HEK293 (cell line): ENCODE measurements at regions of chr16 and their contacts with region 1.

Region 1: DNA sequence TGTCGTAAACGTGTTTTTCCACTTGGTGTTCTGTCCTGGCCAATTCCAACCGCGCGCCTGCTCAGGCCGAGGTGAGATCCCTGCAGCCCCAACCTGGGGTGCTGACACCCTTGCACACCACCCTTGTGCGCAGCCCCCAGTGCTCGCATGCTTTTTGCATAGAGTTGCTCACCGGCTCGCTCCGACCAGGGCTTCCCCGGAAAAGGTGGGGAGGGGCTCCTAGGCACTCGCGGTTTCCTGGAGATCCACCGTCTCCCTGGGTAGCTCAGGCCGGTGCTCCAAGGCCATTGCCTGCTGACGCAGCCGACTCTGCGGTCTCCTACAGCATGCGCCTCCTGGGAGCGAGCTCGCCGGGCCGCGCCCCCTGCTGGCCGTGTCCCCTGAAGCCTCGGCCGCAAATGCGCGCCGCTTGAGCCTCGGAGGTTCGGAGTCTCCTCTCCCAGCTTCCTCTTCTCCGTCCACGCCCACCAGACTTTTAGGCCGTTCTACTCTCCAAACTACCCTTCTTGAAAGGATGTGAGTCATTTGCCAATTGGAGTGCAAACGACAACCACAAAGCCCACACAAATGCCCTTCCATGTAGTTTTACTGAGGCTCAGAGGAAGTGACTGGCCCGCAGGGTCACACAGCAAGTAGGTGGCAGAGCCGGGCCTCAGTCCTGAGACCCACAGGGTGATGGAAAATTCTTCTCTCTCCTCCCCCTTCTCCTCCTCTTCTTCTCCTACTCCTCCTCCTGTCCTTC is 7.2 kb upstream of the PDP2 start:
- H3K4me3 ChIP-seq: peak overlapping the region; percentile 5; the same call in 1 of the 2 replicates
- H3K27ac ChIP-seq: no peak overlapping the region; the same call in 1 of the 2 replicates
- H3K4me1 ChIP-seq: no peaks in the 10 kb centered on the region
- CTCF ChIP-seq: peak; percentile 98

Region 2: GRCh38 chr16:66406534-66407221 is 466.4 kb before region 1 on chr16:
- CTCF ChIA-PET with region 1: interaction called, 27 read pairs
- POLR2A ChIA-PET with region 1: no interaction called
- H3K4me3 ChIP-seq: peak overlapping the region; percentile 51
- H3K27ac ChIP-seq: no peak overlapping the region
- H3K4me1 ChIP-seq: no peaks in the 10 kb centered on the region; the same call in 1 of the 2 replicates
- CTCF ChIP-seq: peak; percentile 93

Region 3: GRCh38 chr16:66728117-66728787 is 144.9 kb before region 1 on chr16:
- CTCF ChIA-PET with region 1: interaction called, 29 read pairs
- POLR2A ChIA-PET with region 1: no interaction called
- H3K4me3 ChIP-seq: no peak overlapping the region
- H3K27ac ChIP-seq: no peak overlapping the region
- H3K4me1 ChIP-seq: no peaks in the 10 kb centered on the region
- CTCF ChIP-seq: peak; percentile 34

Region 4: DNA sequence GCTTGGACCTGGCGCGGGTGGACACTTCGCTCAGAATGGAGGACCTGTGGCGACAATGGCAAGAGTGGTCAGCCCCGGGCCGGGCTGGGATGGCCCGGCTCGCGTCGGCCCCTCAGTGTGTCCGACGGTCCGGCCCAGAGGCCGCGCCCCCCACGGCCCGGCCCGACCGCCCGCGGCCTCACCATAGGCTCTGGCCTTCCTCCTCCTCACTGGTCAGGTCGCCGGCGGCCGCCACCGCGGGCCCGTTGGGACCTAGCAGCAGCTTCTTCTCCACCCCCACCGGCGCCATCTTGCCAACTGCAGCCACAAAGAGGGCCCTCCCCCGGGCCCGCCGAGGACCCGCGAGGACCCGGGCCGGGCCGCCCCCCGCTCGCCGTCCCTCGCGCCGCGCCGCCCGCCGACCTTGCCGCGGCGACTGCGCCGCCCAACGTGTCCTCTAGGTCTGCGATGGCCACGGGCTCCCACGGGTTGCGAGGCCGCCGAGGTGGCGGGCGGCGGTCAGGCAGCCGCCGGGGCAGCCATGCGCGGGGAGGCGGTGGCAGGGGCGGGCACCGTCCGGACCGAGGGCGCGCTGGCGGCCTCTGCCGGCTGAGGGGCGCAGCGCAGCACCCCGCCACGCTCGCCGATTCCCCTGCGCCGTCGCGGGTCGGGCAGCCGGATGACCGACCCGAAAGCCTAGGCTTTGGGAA is 121.7 kb before region 1 on chr16 and contains the start of gene DYNC1LI2:
- CTCF ChIA-PET with region 1: interaction called, 10 read pairs
- POLR2A ChIA-PET with region 1: no interaction called
- H3K4me3 ChIP-seq: peak within 1 kb of the TSS; percentile 87
- H3K27ac ChIP-seq: peak within 1 kb of the TSS; percentile 98
- H3K4me1 ChIP-seq: peaks cover 6% of the 10 kb centered on the region
- CTCF ChIP-seq: 0 out of 2 replicates have a peak, but pooled peaks have one; percentile 32

Region 5: GRCh38 chr16:66786551-66786950 is 86.6 kb before region 1 on chr16:
- CTCF ChIA-PET with region 1: no interaction called
- POLR2A ChIA-PET with region 1: no interaction called
- H3K4me3 ChIP-seq: no peak overlapping the region
- H3K27ac ChIP-seq: no peak overlapping the region
- H3K4me1 ChIP-seq: no peaks in the 10 kb centered on the region
- CTCF ChIP-seq: no peak

Region 6: GRCh38 chr16:66824006-66824405 is 49.1 kb before region 1 on chr16:
- CTCF ChIA-PET with region 1: interaction called, 74 read pairs
- POLR2A ChIA-PET with region 1: interaction called, 4 read pairs
- H3K4me3 ChIP-seq: no peak overlapping the region
- H3K27ac ChIP-seq: no peak overlapping the region
- H3K4me1 ChIP-seq: no peaks in the 10 kb centered on the region
- CTCF ChIP-seq: no peak

Region 7: GRCh38 chr16:66844342-66845079 is 28.6 kb before region 1 on chr16 and contains the start of gene CA7:
- CTCF ChIA-PET with region 1: interaction called, 14 read pairs
- POLR2A ChIA-PET with region 1: no interaction called
- H3K4me3 ChIP-seq: peak within 1 kb of the TSS; percentile 13
- H3K27ac ChIP-seq: no peak within 1 kb of the TSS
- H3K4me1 ChIP-seq: no peaks in the 10 kb centered on the region
- CTCF ChIP-seq: no peak

Region 8: GRCh38 chr16:66858740-66859396 is 14.2 kb before region 1 on chr16:
- CTCF ChIA-PET with region 1: interaction called, 19 read pairs
- POLR2A ChIA-PET with region 1: interaction called, 6 read pairs
- H3K4me3 ChIP-seq: no peak overlapping the region
- H3K27ac ChIP-seq: no peak overlapping the region
- H3K4me1 ChIP-seq: no peaks in the 10 kb centered on the region
- CTCF ChIP-seq: no peak

Region 9: DNA sequence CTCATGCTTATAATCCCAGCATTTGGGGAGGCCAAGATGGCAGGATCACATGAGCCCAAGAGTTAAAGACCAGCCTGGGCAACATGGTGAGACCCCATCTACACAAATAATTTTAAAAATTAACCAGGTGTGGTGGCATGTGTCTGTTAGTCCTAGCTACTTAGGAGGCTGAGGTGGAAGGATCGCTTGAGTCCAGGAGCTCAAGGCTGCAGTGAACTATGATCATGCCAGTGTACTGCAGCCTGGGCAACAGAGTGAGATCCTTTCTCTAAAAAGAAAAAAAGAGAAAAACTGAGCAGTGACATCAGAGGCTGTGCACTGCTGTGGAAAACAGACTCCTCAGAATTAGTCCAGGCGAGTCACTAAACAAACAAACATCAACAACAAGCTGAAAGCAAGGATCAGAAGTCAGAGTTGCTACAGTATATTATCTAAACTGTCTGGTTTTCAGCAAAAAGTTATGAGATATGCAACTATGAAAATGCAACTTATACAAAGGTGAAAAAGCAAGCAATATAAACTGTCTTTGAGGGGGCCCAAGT is 195.2 kb after region 1 on chr16:
- CTCF ChIA-PET with region 1: no interaction called
- POLR2A ChIA-PET with region 1: no interaction called
- H3K4me3 ChIP-seq: no peak overlapping the region
- H3K27ac ChIP-seq: no peak overlapping the region
- H3K4me1 ChIP-seq: no peaks in the 10 kb centered on the region
- CTCF ChIP-seq: no peak

Region 10: GRCh38 chr16:67084345-67085028 is 211.4 kb after region 1 on chr16:
- CTCF ChIA-PET with region 1: no interaction called
- POLR2A ChIA-PET with region 1: no interaction called
- H3K4me3 ChIP-seq: no peak overlapping the region
- H3K27ac ChIP-seq: no peak overlapping the region
- H3K4me1 ChIP-seq: 0 out of 2 replicates have a peak, but pooled peaks cover 4% of the 10 kb centered on the region
- CTCF ChIP-seq: no peak